ENCODE measurements at regions of chr2 and their contacts with region 1.

Region 1: GRCh38 chr2:234550511-234551107 is 53.7 kb upstream of the ARL4C start:
- DNase-seq: peak; percentile 26 to 42
- ATAC-seq: peak; percentile 45 to 73
- H3K4me3 ChIP-seq: no peak overlapping the region
- H3K27ac ChIP-seq: no peak overlapping the region
- H3K4me1 ChIP-seq: no peaks in the 10 kb centered on the region
- H3K27me3 ChIP-seq: peaks cover 0 to 2% (median 0%) of the 10 kb centered on the region in 3 donors
- CTCF ChIP-seq: peak; percentile 76 to 94 (median 84)
- POLR2A ChIP-seq: no peak

Region 2: DNA sequence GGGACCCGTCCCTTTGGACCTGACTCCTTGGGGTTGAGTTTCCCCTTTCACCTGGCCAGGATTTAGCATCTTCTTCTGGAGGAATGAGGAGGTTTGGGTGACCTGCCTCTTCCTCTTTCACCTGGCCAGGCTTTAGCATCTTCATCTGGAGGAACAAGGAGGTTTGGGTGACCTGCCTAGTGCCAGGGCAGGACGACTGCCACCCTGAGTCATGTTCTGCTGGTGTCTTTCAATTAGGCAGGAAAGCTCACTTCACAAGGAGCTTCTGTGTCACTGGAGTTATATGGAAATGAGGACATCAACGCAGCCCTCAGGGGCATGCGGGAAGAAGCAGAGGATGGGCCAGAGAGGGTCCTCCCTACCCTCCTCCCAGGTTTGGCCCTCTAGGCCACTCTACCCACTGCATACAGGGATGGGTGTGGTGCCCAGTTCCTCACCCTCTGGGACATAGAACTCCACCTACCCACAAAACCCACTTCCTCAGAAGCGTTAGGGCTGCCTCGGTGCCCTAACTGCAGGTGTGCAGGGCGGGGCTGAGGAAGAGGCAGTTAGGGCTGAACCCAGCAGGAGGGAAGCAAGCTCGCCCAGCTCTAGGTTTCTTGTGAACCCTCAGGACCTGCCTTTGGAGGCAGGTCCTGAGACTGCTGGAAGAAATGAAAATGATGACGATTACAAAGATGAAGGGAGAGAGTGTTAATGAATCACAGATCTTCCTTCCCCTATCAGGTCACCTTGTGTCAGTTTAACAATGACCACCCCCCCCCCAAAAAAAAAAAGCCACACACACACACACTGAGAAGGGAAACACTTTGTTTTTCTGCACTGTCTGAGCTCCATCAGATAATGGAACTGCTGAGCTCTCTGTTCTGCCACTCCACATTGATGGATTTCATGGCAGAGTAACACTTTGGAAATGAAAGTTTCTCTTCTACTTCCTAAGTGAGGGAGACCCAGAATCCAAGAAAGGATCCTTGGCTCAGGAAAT is 124.7 kb before region 1 on chr2:
- in situ Hi-C with region 1: no loop called
- intact Hi-C with region 1: no loop called
- DNase-seq: no peak
- ATAC-seq: no peak
- H3K4me3 ChIP-seq: no peak overlapping the region
- H3K27ac ChIP-seq: no peak overlapping the region
- H3K4me1 ChIP-seq: no peaks in the 10 kb centered on the region
- H3K27me3 ChIP-seq: no peaks in the 10 kb centered on the region
- CTCF ChIP-seq: no peak
- POLR2A ChIP-seq: no peak

Region 3: DNA sequence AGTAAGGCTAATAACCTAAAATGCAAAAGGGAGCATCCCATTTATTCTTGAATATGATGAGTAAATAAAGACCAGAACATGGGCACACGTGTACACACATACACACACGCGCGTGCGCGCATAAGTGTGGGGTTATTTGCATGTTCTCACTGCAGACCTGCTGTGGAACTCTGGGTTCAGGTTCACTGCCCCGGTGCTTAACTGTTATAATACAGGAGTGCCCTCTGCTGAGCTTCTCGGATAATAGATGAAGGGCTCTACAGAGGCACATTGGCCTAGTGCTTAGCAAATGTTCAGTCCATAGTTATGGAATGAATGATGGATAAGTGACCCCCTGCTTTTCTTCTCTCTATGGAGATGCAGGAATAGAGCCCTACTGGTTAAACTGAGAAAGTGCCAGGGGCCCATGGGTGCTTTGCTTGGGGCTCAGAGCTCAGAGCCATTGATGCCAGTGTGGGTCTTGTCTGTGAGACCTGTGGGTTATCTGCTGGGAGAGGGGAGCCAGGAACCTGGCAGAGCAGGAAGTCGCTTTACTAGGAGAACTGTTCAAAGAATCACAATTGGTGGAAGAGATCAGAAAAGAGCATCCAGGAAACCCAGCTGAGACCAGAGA is 50.1 kb before region 1 on chr2:
- in situ Hi-C with region 1: no loop called
- intact Hi-C with region 1: no loop called
- DNase-seq: no peak
- ATAC-seq: no peak
- H3K4me3 ChIP-seq: no peak overlapping the region
- H3K27ac ChIP-seq: no peak overlapping the region
- H3K4me1 ChIP-seq: peaks cover 9% of the 10 kb centered on the region in 2 donors
- H3K27me3 ChIP-seq: peaks cover 0 to 5% (median 4%) of the 10 kb centered on the region in 3 donors
- CTCF ChIP-seq: peak in 2 of 5 experiments; percentile 20 to 40
- POLR2A ChIP-seq: no peak

Region 4: GRCh38 chr2:234881413-234882241 is 331.0 kb after region 1 on chr2:
- in situ Hi-C with region 1: loop called in 1 of 4 experiments (anchors 25 kb)
- intact Hi-C with region 1: no loop called
- DNase-seq: peak in 1 of 2 donors; percentile 58
- ATAC-seq: peak in 1 of 2 donors; percentile 84
- H3K4me3 ChIP-seq: peak overlapping the region in 1 of 4 donors; percentile 22
- H3K27ac ChIP-seq: no peak overlapping the region
- H3K4me1 ChIP-seq: peaks cover 0 to 12% of the 10 kb centered on the region in 2 donors
- H3K27me3 ChIP-seq: no peaks in the 10 kb centered on the region
- CTCF ChIP-seq: peak in 4 of 5 experiments; percentile 22 to 59 (median 36)
- POLR2A ChIP-seq: no peak

Region 5: DNA sequence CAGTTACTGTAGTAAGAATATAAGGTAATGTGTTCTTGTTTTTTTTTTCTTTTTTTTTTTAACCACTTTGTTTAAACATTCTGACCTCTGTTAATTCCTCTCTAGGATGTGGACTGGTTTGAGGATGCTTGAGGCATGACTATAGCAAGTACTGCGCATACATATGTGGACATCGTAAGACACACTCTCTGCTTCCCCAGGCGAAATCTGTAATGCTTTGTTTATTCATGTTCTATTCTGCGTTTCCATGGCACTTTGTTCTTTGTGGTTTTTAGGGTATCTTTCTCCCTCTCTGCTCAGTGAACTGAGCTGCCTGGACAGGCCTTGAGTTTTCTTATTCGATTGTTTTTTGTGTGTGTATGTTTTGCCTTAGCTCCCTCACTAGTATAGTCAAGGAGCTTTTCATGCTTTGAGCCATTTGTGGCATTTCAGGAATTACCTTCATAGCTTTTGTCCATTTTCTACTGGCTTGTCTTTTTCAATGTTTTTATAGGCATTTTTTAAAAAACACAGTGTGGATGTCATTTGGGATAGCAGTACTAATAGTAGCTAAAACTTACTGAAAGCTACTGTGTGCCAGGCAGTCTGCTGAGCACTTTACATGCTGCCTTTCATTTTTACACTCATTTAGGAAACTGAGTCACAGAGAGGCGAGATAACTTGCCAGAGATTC is 399.3 kb after region 1 on chr2:
- in situ Hi-C with region 1: no loop called
- intact Hi-C with region 1: no loop called
- DNase-seq: no peak
- ATAC-seq: no peak
- H3K4me3 ChIP-seq: no peak overlapping the region
- H3K27ac ChIP-seq: no peak overlapping the region
- H3K4me1 ChIP-seq: peaks cover 5 to 13% of the 10 kb centered on the region in 2 donors
- H3K27me3 ChIP-seq: peaks cover 0 to 12% (median 0%) of the 10 kb centered on the region in 3 donors
- CTCF ChIP-seq: no peak
- POLR2A ChIP-seq: no peak

Region 6: DNA sequence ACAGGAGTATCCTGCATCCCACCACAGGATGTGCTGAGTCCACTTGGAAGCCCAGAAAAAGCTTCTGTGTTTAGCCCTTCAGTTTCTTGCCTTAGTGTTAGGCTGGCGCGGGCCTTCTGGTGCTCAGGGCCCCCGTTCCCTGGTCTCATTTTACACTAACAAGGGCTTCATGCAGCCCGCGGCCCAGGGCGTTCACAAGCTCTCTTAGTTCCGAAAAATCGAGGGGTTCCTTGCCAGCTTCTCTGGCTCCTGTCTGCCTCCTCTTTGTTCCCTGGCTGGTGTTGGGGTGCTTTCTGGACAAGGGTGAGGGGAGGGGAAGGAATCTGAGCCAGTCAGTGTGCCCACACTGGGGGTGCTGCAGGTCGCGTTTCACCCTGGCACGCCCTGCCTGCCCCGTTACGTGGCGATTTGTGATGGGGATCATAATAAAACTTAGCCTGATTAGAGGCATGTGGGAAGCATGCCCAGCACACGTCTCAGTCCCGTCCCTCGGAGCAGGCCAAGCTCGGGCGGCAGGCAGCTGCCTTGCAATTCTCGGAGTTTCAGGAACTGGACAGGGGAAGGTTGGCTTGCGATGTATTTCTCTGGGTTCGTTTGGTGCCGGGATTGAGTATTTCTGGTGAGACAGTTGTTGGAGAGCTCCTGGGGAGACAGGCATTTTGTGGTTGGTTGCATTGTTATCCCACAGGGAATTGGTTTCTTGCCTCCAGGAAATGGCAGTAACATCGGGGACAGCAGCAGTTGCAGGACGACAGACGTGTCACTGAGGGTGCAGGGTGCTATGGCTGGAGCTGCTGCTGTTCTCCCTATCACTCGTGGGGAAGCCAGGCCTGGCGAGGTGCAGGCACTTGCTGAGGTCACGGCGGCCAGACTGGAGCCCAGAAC is 424.1 kb after region 1 on chr2:
- in situ Hi-C with region 1: no loop called
- intact Hi-C with region 1: no loop called
- DNase-seq: peak in 1 of 2 donors; percentile 27
- ATAC-seq: peak; percentile 23 to 43
- H3K4me3 ChIP-seq: no peak overlapping the region
- H3K27ac ChIP-seq: peak overlapping the region in 2 of 4 donors; percentile 27 to 58
- H3K4me1 ChIP-seq: peaks cover 21 to 25% of the 10 kb centered on the region in 2 donors
- H3K27me3 ChIP-seq: no peaks in the 10 kb centered on the region
- CTCF ChIP-seq: no peak
- POLR2A ChIP-seq: no peak

Region 7: GRCh38 chr2:235106874-235107639 is 556.4 kb after region 1 on chr2:
- in situ Hi-C with region 1: loop called in 1 of 4 experiments (anchors 5 kb)
- intact Hi-C with region 1: loop called (anchors 1 kb)
- DNase-seq: peak in 1 of 2 donors; percentile 26
- ATAC-seq: peak in 1 of 2 donors; percentile 58
- H3K4me3 ChIP-seq: no peak overlapping the region
- H3K27ac ChIP-seq: no peak overlapping the region
- H3K4me1 ChIP-seq: no peaks in the 10 kb centered on the region
- H3K27me3 ChIP-seq: no peaks in the 10 kb centered on the region
- CTCF ChIP-seq: peak; percentile 37 to 58 (median 55)
- POLR2A ChIP-seq: no peak

Region 8: DNA sequence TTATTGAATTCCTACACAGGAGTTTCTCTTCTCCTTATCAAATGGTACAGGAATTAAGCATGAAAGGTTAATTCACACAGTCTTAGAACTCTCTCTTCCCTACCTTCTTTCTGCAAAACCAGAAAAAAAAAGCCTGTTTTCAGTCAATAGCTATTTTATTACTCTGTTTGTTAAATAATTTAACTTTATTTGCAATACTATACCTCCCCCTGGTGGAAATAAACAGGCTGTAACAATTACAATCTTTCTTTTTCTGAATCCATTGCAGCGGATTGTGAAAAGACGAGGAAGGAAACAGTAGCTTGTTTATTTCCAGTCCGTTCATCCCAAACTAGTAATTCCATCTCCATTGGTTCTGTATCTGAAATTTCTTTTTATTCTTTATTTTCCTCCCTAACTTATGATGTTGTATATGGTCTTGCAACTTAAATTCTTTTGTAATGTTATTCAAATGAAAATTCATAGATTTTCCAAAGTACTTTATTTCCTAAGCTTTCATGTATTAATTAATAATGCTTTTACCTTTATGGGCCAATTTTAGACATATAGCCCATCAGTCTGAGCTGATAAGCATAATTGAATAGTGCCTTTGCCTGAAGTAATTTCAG is 566.4 kb after region 1 on chr2:
- in situ Hi-C with region 1: loop called in 3 of 4 experiments (anchors 5 kb)
- intact Hi-C with region 1: loop called (anchors 1 kb)
- DNase-seq: no peak
- ATAC-seq: no peak
- H3K4me3 ChIP-seq: no peak overlapping the region
- H3K27ac ChIP-seq: no peak overlapping the region
- H3K4me1 ChIP-seq: peaks cover 0 to 3% of the 10 kb centered on the region in 2 donors
- H3K27me3 ChIP-seq: no peaks in the 10 kb centered on the region
- CTCF ChIP-seq: peak; percentile 51 to 66 (median 55)
- POLR2A ChIP-seq: no peak

Measured in gastrocnemius medialis (tissue), 4 donors.